Transverse colon (tissue), 4 donors: ENCODE measurements at regions of chr14 and their contacts with region 1.

Region 1: DNA sequence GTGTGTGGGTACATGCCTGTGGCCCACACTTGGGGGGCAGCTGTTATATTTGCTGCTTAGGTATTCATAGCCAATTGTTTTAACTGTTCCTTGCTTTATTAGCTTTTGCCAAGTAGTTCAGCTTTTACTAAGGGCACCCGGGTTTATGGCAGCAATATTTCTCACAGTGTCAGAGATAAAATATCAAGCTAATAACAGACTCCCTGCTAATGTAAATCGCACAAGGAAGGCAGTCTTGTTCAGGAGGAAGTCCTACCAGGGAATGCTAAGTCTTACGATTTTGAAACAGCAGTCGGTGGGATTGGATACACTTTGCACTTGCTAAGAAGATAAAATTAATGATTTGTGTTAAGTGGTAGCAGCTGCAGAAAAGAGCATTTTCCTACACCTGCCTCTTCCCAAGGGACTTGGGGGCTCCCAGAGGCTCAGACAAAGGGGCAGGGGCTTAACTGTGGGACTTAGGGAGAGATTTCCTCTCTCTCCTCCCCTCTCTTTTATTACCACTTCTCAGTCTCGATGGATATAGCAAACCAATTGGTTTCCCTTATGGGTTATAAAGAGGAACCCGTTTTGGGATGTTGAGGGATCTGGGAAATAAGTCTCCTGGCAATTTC is 175.1 kb downstream of the NRXN3 start:
- DNase-seq: no peak
- H3K4me3 ChIP-seq: no peak overlapping the region
- H3K27ac ChIP-seq: no peak overlapping the region
- H3K4me1 ChIP-seq: no peaks in the 10 kb centered on the region
- H3K27me3 ChIP-seq: no peaks in the 10 kb centered on the region
- CTCF ChIP-seq: no peak
- EP300 ChIP-seq: no peak
- POLR2A ChIP-seq: no peak

Region 2: GRCh38 chr14:78307671-78308070 is 37.6 kb before region 1 on chr14:
- in situ Hi-C with region 1: no loop called
- intact Hi-C with region 1: loop called (anchors 2 kb)
- DNase-seq: no peak
- H3K4me3 ChIP-seq: no peak overlapping the region
- H3K27ac ChIP-seq: no peak overlapping the region
- H3K4me1 ChIP-seq: no peaks in the 10 kb centered on the region
- H3K27me3 ChIP-seq: no peaks in the 10 kb centered on the region
- CTCF ChIP-seq: no peak
- EP300 ChIP-seq: no peak
- POLR2A ChIP-seq: no peak